ENCODE measurements at regions of chr22 and their contacts with region 1.

Region 1: DNA sequence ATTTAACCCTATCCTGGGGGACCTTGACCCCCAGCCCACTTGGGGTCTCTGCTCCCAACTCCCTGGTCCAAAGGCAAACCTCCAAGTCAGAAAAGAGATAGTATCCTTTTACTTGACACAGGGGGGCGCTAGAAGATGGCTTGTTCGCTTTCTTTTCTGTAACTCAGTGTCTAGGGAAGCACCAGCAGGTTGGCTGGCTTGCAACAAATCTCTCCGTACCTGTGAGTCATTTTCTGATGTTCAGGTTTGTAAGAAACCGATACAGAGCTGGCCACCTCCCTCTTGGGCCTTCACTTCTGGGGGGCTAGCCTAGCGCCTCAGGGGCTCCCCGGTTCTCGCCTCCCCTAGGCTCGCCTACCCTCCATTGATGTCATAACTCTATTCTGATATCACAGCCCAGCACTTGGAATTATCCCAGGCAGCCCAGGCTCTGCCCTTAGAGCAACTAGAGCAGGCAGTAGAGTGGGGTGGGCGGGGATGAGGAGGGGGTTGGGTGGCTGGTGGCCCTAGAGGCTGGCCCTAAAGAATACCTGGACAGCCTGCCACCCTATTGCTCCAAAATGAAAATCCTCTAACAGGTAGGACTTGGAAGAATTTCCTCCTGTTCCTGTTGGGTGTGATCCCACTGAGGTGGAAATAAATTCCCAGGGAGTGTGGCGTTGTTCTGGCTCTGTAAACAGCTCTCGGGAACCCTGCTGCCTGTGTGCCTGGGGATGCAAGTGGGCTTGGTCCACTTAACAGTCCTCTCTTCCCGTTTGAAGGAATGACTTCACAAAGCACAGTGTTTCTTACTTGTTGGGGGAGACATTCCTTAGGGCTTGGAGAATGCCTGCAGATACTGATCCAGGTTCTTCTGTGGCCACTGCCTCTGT is 69.4 kb downstream of the OSBP2 start:
- DNase-seq: peak in 6 of 10 donors; percentile 33 to 82 (median 54)
- H3K4me3 ChIP-seq: no peak overlapping the region
- H3K27ac ChIP-seq: no peak overlapping the region
- H3K27me3 ChIP-seq: no peaks in the 10 kb centered on the region
- CTCF ChIP-seq: peak in 54 of 56 donors; percentile 41 to 78 (median 64)

Region 2: GRCh38 chr22:30668386-30668710 is 95.7 kb before region 1 on chr22:
- intact Hi-C with region 1: no loop called
- DNase-seq: no peak
- H3K4me3 ChIP-seq: peak overlapping the region; percentile 59 to 98 (median 88)
- H3K27ac ChIP-seq: peak overlapping the region in 38 of 59 donors; percentile 2 to 88 (median 56)
- H3K27me3 ChIP-seq: no peaks in the 10 kb centered on the region
- CTCF ChIP-seq: no peak

Region 3: GRCh38 chr22:30890686-30891442 is 126.8 kb after region 1 on chr22:
- intact Hi-C with region 1: loop called in 1 of 2 experiments (anchors 10 kb)
- DNase-seq: peak in 6 of 10 donors; percentile 30 to 68 (median 54)
- H3K4me3 ChIP-seq: no peak overlapping the region
- H3K27ac ChIP-seq: peak overlapping the region in 21 of 59 donors; percentile 11 to 68 (median 41)
- H3K27me3 ChIP-seq: no peaks in the 10 kb centered on the region
- CTCF ChIP-seq: peak; percentile 19 to 85 (median 73)

Region 4: DNA sequence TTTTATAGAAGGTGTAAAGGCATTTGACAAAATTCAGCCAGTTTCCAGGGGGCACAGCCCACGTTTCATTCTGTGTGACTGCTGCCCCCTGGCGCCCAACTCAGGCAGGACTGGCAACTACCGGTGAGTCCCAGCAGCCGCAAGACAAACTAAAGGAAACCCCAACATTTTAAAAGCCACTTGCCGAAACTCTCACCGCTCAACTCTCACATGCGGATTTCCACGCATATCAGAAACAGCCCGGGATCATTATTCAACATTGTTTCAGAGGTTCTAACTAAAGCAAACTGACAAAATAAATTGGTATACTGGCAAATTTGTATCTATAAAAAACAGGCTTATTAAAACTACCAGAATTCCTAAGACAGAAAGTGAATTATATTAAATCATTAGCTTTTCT is 156.4 kb after region 1 on chr22:
- intact Hi-C with region 1: loop called (anchors 1 to 5 kb)
- DNase-seq: peak; percentile 75 to 90 (median 84)
- H3K4me3 ChIP-seq: peak overlapping the region in 13 of 59 donors; percentile 3 to 64 (median 22)
- H3K27ac ChIP-seq: no peak overlapping the region
- H3K27me3 ChIP-seq: no peaks in the 10 kb centered on the region
- CTCF ChIP-seq: peak; percentile 75 to 99 (median 95)

Measured in dorsolateral prefrontal cortex (tissue), 120 donors.